SK-N-SH (cell line): ENCODE measurements at regions of chr3 and their contacts with region 1.

Region 1: DNA sequence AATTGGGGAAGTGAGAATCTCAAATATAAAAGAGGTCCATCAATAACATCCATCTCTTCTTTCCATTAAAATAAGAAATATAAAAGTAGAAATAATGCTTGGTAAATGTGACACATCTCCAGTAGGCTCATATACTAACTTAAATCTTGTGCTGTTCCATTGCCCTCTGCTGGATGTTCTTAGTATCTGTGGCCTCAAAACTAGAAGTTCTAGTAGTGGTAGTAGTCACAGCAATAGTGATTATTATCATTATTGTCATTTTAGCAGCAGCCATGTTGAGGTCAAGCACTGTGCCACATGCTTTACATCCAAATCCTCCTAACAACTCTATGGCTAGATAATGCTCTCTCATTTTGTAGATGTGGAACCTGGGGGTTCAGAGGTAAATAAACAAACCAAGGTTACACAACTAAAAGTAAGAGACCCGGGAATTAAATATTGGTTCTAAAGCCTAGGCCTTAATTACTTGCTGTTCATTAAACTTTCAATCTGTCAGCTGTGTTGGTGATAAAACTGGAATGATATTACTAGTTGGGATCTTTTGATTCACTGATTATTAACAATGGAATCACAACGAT is 20.2 kb upstream of the BTLA start:
- DNase-seq: peak; percentile 40
- H3K4me3 ChIP-seq: no peak overlapping the region
- H3K27ac ChIP-seq: no peak overlapping the region
- H3K4me1 ChIP-seq: no peaks in the 10 kb centered on the region
- H3K27me3 ChIP-seq: no peaks in the 10 kb centered on the region
- CTCF ChIP-seq: peak; percentile 83
- EP300 ChIP-seq: no peak
- RAD21 ChIP-seq: peak; percentile 84

Region 2: DNA sequence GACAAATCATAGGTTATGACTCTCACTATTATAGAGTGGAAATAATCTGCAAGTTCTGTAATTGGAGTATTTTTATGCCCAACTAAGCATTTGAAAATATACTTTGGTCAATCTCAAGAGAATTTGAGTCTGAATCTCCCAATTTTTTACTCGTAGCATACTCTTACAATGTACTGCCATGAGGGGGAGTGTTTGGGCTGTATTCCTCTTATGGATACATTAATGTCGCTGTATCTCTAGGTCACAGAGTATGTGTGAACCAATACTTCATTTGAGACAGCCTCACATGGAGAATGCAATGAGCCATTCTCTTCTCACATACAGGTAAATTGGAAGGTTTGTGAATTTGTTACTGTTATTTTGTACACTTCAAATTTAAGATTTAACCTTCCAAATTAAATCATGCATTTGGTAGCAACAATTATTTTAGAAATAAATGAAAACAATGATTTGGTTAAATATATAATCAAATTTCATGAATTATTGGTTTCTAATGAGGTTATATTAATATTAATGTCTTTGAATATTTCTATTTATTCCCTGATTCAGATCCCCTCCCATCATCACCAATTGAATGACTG is 192.1 kb before region 1 on chr3:
- CTCF ChIA-PET with region 1: interaction called, 15 read pairs
- POLR2A ChIA-PET with region 1: no interaction called
- DNase-seq: peak; percentile 66
- H3K4me3 ChIP-seq: no peak overlapping the region
- H3K27ac ChIP-seq: no peak overlapping the region
- H3K4me1 ChIP-seq: no peaks in the 10 kb centered on the region
- H3K27me3 ChIP-seq: no peaks in the 10 kb centered on the region
- CTCF ChIP-seq: peak; percentile 78
- EP300 ChIP-seq: no peak
- RAD21 ChIP-seq: peak; percentile 88

Region 3: DNA sequence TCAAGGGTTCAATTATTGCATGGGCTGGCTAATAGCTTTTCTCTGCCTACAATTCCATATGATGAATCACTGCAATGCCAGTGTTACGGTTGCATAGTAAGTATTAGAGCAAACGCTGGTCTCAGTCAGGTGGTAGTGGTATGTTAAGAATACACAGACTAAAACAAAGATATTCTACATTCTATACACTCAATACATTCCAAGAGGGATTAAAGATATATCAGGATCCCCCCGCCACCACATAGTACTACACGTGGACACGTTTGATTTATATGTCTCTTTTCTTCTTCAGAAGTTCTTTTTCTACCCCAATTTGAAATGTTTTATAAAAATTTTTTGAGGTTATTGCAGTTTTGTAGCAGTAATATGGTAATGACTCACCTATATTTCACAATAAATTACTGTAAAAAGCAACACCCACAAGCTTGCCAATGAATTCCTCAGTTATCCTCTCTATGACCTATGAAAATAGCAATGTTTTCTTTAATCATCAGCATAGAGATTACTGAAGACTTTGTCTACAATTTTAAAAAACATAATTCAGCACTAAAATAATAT is 259.0 kb after region 1 on chr3:
- CTCF ChIA-PET with region 1: no interaction called
- POLR2A ChIA-PET with region 1: no interaction called
- DNase-seq: no peak
- H3K4me3 ChIP-seq: no peak overlapping the region
- H3K27ac ChIP-seq: peak overlapping the region; percentile 11 to 55; a peak in 3 of 4 replicates
- H3K4me1 ChIP-seq: peaks cover 0 to 34% of the 10 kb centered on the region in 2 experiments; a peak in 2 of 4 replicates
- H3K27me3 ChIP-seq: no peaks in the 10 kb centered on the region
- CTCF ChIP-seq: no peak
- EP300 ChIP-seq: peak in 1 of 2 experiments; percentile 71; a peak in 2 of 4 replicates
- RAD21 ChIP-seq: no peak